T-cell (primary cell): ENCODE measurements at regions of chr3 and their contacts with region 1.

Region 1: GRCh38 chr3:61875046-61875844 is 313.9 kb downstream of the PTPRG start:
- DNase-seq: no peak
- ATAC-seq: no peak
- H3K4me3 ChIP-seq: no peak overlapping the region
- H3K4me3 Mint-ChIP-seq: no peak overlapping the region
- H3K27ac ChIP-seq: no peak overlapping the region
- H3K27ac Mint-ChIP-seq: no peak overlapping the region
- H3K4me1 ChIP-seq: no peaks in the 10 kb centered on the region
- H3K4me1 Mint-ChIP-seq: no peaks in the 10 kb centered on the region
- H3K27me3 ChIP-seq: no peaks in the 10 kb centered on the region
- H3K27me3 Mint-ChIP-seq: peaks cover 0 to 6% of the 10 kb centered on the region in 2 donors

Region 2: DNA sequence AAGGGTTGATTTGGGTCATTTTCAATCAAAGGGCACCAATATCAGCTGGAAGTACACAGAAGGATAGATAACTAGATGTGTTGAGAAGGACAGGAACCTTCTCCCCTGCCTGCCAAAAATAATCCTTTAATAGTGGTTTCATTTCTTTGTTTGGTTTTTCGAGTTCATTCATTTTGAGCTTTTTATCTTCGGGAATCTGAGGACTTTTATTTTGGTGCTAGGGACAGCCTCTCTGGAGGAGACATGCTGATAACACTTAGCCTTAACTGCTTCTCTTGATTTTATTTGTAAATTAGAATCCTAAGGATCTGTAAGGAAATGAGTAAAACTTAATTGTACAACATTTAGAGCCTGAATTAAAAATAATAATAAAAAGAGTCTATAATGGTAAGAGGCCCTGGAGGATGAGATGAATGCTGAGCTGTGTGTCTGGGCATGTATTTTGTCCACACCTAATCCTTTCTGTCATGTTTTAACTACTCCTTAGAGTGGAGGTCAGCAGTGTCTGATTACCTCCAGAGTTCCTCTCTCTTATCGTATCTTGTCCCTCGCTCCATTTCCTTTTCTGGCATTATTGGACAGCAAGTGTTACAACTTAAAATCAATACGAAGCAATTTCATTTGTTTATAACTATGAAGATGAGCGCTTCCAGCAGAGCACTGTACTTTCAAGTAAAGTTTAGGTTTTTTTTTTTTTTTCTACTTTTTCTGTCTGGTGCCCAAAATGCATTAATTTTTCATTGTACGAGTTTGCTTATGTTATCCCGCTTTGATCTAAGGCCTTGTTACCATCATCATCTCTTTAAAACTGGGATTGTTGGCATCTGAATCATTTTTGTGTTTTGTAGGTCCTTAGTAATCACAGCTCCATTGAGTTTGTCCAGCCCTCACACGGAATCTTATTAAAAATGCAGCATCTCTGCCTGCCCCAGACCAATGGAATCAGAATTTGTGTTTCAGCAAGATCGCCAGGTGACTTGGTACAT is 291.1 kb before region 1 on chr3:
- CTCF ChIA-PET with region 1: no interaction called
- POLR2A ChIA-PET with region 1: interaction called in 1 of 2 experiments, 10 read pairs
- DNase-seq: no peak
- ATAC-seq: no peak
- H3K4me3 ChIP-seq: no peak overlapping the region
- H3K4me3 Mint-ChIP-seq: no peak overlapping the region
- H3K27ac ChIP-seq: no peak overlapping the region
- H3K27ac Mint-ChIP-seq: no peak overlapping the region
- H3K4me1 ChIP-seq: no peaks in the 10 kb centered on the region
- H3K4me1 Mint-ChIP-seq: no peaks in the 10 kb centered on the region
- H3K27me3 ChIP-seq: peaks cover 0 to 2% of the 10 kb centered on the region in 2 experiments
- H3K27me3 Mint-ChIP-seq: peaks cover 0 to 6% of the 10 kb centered on the region in 2 donors